ENCODE measurements at regions of chr2 and their contacts with region 1.

Region 1: GRCh38 chr2:143110758-143111428 is 18.3 kb upstream of the ARHGAP15 start:
- DNase-seq: peak; percentile 89
- H3K4me3 Mint-ChIP-seq: peak overlapping the region; percentile 55
- H3K27ac Mint-ChIP-seq: peak overlapping the region; percentile 83
- H3K4me1 Mint-ChIP-seq: peaks cover 38% of the 10 kb centered on the region
- H3K27me3 Mint-ChIP-seq: peaks cover 4% of the 10 kb centered on the region

Region 2: DNA sequence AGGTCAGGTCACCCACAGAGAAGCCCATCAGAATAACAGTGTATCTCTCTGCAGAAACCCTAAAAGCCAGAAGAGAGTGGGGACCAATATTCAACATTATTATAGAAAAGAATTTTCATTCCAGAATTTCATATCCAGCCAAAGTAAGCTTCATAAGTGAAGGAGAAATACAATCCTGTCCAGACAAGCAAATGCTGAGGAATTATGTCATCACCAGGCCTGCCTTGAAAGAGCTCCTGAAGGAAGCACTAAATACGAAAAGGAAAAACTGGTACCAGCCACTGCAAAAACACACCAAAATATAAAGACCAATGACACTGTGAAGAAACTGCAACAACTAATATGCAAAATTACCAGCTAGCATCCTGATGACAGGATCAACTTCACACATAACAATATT is 493.4 kb before region 1 on chr2:
- intact Hi-C with region 1: no loop called
- DNase-seq: no peak
- H3K4me3 Mint-ChIP-seq: no peak overlapping the region
- H3K27ac Mint-ChIP-seq: no peak overlapping the region
- H3K4me1 Mint-ChIP-seq: no peaks in the 10 kb centered on the region
- H3K27me3 Mint-ChIP-seq: no peaks in the 10 kb centered on the region

Region 3: GRCh38 chr2:142903780-142904179 is 207.1 kb before region 1 on chr2:
- intact Hi-C with region 1: no loop called
- DNase-seq: no peak
- H3K4me3 Mint-ChIP-seq: no peak overlapping the region
- H3K27ac Mint-ChIP-seq: no peak overlapping the region
- H3K4me1 Mint-ChIP-seq: no peaks in the 10 kb centered on the region
- H3K27me3 Mint-ChIP-seq: no peaks in the 10 kb centered on the region

Region 4: DNA sequence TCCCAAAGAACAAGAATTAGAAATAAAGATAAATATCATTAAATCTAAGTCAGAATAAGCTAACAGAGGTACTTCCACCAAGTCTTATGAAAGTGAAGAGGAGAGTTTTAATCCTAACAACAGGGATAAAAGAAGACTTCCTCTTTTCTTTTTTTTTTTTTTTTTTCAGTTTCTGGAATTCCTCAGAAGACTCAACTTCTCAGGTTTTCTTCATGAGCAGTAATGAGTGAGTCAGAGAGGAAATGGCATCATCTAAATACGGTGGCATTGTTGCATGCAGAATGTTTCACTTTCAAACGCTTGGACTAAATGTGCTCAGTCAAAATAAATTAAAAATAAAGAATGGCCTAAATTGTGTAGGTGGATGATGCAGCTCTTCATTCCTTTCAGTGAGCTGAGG is 27.3 kb before region 1 on chr2:
- intact Hi-C with region 1: loop called (anchors 2 kb)
- DNase-seq: no peak
- H3K4me3 Mint-ChIP-seq: peak overlapping the region; percentile 28
- H3K27ac Mint-ChIP-seq: peak overlapping the region; percentile 48
- H3K4me1 Mint-ChIP-seq: peaks cover 27% of the 10 kb centered on the region
- H3K27me3 Mint-ChIP-seq: peaks cover 5% of the 10 kb centered on the region

Region 5: DNA sequence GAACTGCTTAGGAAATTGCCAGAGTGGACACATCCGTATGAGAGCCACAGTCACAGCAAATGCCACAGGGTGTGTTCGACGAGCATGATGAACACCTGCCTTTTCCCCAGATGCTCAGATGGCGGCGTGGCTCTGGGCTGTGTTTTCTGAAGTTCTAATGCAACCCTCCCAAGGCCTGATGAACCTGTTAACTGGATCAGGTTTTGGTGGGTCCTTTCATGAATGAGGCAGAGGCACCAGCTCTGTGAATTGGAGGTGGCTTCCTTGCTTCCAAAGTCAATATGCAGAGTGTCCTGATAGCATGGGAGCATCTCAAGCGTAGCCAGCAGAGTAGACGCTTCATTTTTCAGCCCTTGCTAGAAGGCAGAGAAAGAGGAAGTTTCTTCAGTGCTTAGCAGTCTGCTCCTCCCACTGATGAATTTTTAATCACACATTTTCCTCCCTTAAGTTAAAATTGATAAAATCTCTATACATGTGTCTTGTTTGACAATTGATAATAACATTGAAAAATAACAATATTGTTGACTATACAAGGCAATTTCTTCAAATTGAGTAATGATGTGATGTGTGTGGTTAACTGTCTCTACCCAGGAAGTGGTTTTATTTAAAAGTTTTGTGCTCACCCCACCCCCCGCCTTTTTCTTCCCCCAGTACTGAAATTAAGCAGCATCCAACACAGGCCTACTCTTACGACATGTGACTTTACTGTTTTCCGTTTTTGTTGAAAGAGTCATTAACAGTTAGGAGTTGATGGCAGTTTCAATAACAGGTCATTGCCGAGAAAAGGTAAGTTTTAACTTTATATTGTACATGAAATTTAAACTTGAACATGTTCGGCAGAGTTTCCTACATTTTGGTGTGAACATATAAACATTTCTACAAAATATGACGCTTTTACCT is 18.0 kb after region 1 on chr2 and contains the start of gene ARHGAP15:
- intact Hi-C with region 1: loop called (anchors 1 kb)
- DNase-seq: peak; percentile 90
- H3K4me3 Mint-ChIP-seq: peak within 1 kb of the TSS; percentile 80
- H3K27ac Mint-ChIP-seq: peak within 1 kb of the TSS; percentile 99
- H3K4me1 Mint-ChIP-seq: peaks cover 37% of the 10 kb centered on the region
- H3K27me3 Mint-ChIP-seq: no peaks in the 10 kb centered on the region
- total RNA-seq, gene ARHGAP15: 56.0 and 56.2 TPM in 2 replicates

Region 6: DNA sequence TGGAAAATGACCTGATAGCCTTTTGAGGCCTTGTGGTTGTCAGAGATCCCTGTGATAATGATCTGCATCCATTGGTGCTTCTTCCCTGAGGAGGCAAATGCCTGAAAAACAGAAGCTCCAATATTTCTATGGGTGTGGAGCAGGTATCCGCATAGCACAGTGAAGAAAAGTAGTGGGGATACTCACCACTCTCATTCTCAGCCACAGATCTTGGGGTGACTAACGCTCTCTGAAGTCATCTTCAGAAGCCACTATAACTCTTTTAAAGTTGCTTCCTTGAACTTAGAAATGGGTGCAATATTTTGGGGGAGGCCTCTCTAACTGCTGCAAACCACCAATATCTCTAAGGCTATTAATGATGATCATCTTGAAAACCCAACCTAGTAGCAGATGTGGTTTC is 64.5 kb after region 1 on chr2:
- intact Hi-C with region 1: loop called (anchors 2 kb)
- DNase-seq: peak; percentile 63
- H3K4me3 Mint-ChIP-seq: no peak overlapping the region
- H3K27ac Mint-ChIP-seq: peak overlapping the region; percentile 67
- H3K4me1 Mint-ChIP-seq: peaks cover 45% of the 10 kb centered on the region
- H3K27me3 Mint-ChIP-seq: no peaks in the 10 kb centered on the region

Measured in activated CD4-positive, alpha-beta T cell treated with anti-CD3 and anti-CD28 coated beads, Interleukin-2, amount 10 ng/mL, durations not matched to agents 24 days and 14 days (primary cell).